Activated CD4-positive, alpha-beta T cell treated with anti-CD3 and anti-CD28 coated beads for 36 hours (primary cell): ENCODE measurements at regions of chr12 and their contacts with region 1.

Region 1: GRCh38 chr12:120971299-120972179 is 6.8 kb upstream of the HNF1A start:
- DNase-seq: peak; percentile 41
- ATAC-seq: peak; percentile 97
- H3K4me3 Mint-ChIP-seq: no peak overlapping the region
- H3K27ac Mint-ChIP-seq: no peak overlapping the region
- H3K4me1 Mint-ChIP-seq: no peaks in the 10 kb centered on the region
- H3K27me3 Mint-ChIP-seq: no peaks in the 10 kb centered on the region

Region 2: DNA sequence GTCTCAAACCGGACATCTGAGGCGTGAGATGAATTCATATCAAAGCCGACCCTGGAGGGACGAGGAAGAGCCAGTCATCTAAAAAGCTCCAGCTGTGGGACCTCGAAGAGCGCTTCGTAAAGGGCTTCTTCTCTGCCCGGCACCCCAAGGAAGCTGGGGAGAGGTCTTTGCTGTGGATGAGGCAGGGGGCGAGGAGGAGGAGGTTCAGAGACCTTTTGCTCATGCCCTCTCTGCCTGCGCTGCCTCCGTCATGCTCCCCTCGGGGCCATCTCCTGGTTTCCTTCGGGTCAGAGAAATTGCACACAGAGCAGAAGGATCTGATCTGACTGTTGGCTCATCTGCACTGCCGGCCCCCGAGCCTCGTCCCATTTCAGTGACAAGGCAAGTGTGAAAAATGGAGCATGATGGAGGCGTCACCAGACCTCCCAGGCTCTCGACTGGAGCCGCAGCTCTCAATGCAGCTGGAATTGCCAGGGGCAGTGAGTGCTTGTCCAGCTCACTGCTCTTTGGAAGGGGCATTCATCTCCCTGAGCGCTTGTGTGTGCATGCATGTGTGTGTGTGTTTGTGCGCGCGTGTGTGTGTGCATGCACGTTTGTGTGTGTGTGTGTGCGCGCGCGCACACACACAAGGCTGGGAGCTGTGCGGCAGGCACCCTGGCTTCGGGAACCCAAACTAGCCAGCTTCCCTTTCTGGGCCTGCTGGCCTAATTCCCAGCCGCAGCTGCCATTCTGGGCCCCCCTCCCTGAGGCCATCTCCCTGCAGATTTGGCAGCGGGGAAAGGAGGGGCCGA is 321.9 kb before region 1 on chr12:
- CTCF ChIA-PET with region 1: interaction called, 21 read pairs
- POLR2A ChIA-PET with region 1: no interaction called
- intact Hi-C with region 1: loop called (anchors 1 to 2 kb)
- DNase-seq: peak; percentile 35
- ATAC-seq: peak; percentile 8
- H3K4me3 Mint-ChIP-seq: peak overlapping the region; percentile 37
- H3K27ac Mint-ChIP-seq: no peak overlapping the region
- H3K4me1 Mint-ChIP-seq: peaks cover 15% of the 10 kb centered on the region
- H3K27me3 Mint-ChIP-seq: peaks cover 48% of the 10 kb centered on the region

Region 3: GRCh38 chr12:120725659-120726509 is 245.7 kb before region 1 on chr12 and contains the start of gene ACADS:
- CTCF ChIA-PET with region 1: interaction called, 5 read pairs
- POLR2A ChIA-PET with region 1: no interaction called
- intact Hi-C with region 1: loop called in 1 of 2 experiments (anchors 5 kb)
- DNase-seq: peak; percentile 96
- ATAC-seq: peak; percentile 100
- H3K4me3 Mint-ChIP-seq: peak within 1 kb of the TSS; percentile 78
- H3K27ac Mint-ChIP-seq: peak within 1 kb of the TSS; percentile 64
- H3K4me1 Mint-ChIP-seq: peaks cover 17% of the 10 kb centered on the region
- H3K27me3 Mint-ChIP-seq: no peaks in the 10 kb centered on the region
- total RNA-seq, gene ACADS: 10.1 to 17.4 TPM

Region 4: GRCh38 chr12:120847814-120848213 is 123.7 kb before region 1 on chr12:
- CTCF ChIA-PET with region 1: interaction called, 10 read pairs
- POLR2A ChIA-PET with region 1: interaction called, 3 read pairs
- intact Hi-C with region 1: no loop called
- DNase-seq: no peak
- ATAC-seq: no peak
- H3K4me3 Mint-ChIP-seq: no peak overlapping the region
- H3K27ac Mint-ChIP-seq: peak overlapping the region; percentile 11
- H3K4me1 Mint-ChIP-seq: peaks cover 62% of the 10 kb centered on the region
- H3K27me3 Mint-ChIP-seq: no peaks in the 10 kb centered on the region

Region 5: DNA sequence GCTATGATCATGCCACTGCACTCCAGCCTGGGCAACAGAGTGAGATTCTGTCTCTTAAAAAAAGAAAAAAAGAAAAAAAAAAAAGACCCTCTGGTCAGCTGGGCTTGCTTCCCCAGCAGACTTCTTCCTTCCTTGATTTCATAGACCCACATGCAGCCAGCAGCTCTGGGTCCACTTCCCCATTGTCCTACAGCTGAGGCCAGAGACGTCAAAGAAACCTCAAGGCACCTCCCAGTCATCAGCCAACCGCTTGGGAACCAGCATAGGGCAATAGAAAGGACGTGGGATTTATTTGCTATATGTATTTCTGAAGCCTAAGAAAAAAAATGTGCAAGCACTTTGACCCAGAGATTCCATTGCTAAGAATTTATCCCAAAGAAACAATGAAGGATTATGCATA is 32.0 kb before region 1 on chr12:
- CTCF ChIA-PET with region 1: interaction called, 30 read pairs
- POLR2A ChIA-PET with region 1: no interaction called
- intact Hi-C with region 1: loop called (anchors 1 kb)
- DNase-seq: no peak
- ATAC-seq: no peak
- H3K4me3 Mint-ChIP-seq: no peak overlapping the region
- H3K27ac Mint-ChIP-seq: no peak overlapping the region
- H3K4me1 Mint-ChIP-seq: peaks cover 2% of the 10 kb centered on the region
- H3K27me3 Mint-ChIP-seq: peaks cover 4% of the 10 kb centered on the region

Region 6: DNA sequence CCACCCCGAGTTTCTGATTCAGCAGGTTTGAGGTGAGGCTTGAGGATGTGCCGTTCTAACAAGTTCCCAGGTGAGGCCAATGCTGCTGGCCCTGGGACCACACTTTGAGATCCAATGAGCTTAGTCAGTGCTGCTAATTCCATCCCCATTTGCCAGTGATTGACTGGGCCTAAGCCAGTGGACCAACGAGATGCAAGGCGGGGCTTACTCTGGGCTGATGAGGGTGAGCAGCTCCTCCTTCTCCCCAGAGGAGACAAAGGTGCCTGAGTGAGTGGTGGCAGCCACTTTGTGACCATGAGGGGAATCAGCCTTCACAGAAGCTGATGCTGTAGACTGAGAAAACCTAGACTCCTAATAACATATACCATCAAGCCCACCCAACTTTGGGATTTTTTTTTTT is 16.3 kb before region 1 on chr12:
- CTCF ChIA-PET with region 1: interaction called, 10 read pairs
- POLR2A ChIA-PET with region 1: no interaction called
- intact Hi-C with region 1: no loop called
- DNase-seq: no peak
- ATAC-seq: no peak
- H3K4me3 Mint-ChIP-seq: no peak overlapping the region
- H3K27ac Mint-ChIP-seq: no peak overlapping the region
- H3K4me1 Mint-ChIP-seq: peaks cover 12% of the 10 kb centered on the region
- H3K27me3 Mint-ChIP-seq: no peaks in the 10 kb centered on the region